ENCODE measurements at regions of chr7 and their contacts with region 1.

Region 1: GRCh38 chr7:116671681-116672595 is at the start of gene MET:
- DNase-seq: peak; percentile 93
- H3K4me3 Mint-ChIP-seq: peak within 1 kb of the TSS; percentile 83
- H3K27ac Mint-ChIP-seq: peak within 1 kb of the TSS; percentile 98
- H3K4me1 Mint-ChIP-seq: peaks cover 19% of the 10 kb centered on the region
- H3K27me3 Mint-ChIP-seq: no peaks in the 10 kb centered on the region
- CTCF ChIP-seq: peak; percentile 64
- total RNA-seq, gene MET: 129 and 154 TPM in 2 replicates

Region 2: GRCh38 chr7:115827305-115828045 is 844.5 kb before region 1 on chr7:
- CTCF ChIA-PET with region 1: no interaction called
- POLR2A ChIA-PET with region 1: no interaction called
- intact Hi-C with region 1: no loop called
- DNase-seq: no peak
- H3K4me3 Mint-ChIP-seq: no peak overlapping the region
- H3K27ac Mint-ChIP-seq: no peak overlapping the region
- H3K4me1 Mint-ChIP-seq: no peaks in the 10 kb centered on the region
- H3K27me3 Mint-ChIP-seq: peaks cover 76% of the 10 kb centered on the region
- CTCF ChIP-seq: no peak

Region 3: GRCh38 chr7:116588641-116589594 is 83.0 kb before region 1 on chr7:
- CTCF ChIA-PET with region 1: interaction called, 48 read pairs
- POLR2A ChIA-PET with region 1: interaction called, 28 read pairs
- intact Hi-C with region 1: loop called (anchors 2 kb)
- DNase-seq: peak; percentile 64
- H3K4me3 Mint-ChIP-seq: no peak overlapping the region
- H3K27ac Mint-ChIP-seq: peak overlapping the region; percentile 85
- H3K4me1 Mint-ChIP-seq: peaks cover 16% of the 10 kb centered on the region
- H3K27me3 Mint-ChIP-seq: peaks cover 10% of the 10 kb centered on the region
- CTCF ChIP-seq: peak; percentile 57

Region 4: GRCh38 chr7:116653204-116653603 is 18.7 kb before region 1 on chr7:
- CTCF ChIA-PET with region 1: interaction called, 62 read pairs
- POLR2A ChIA-PET with region 1: interaction called, 91 read pairs
- intact Hi-C with region 1: no loop called
- DNase-seq: peak; percentile 83
- H3K4me3 Mint-ChIP-seq: no peak overlapping the region
- H3K27ac Mint-ChIP-seq: peak overlapping the region; percentile 64
- H3K4me1 Mint-ChIP-seq: peaks cover 17% of the 10 kb centered on the region
- H3K27me3 Mint-ChIP-seq: no peaks in the 10 kb centered on the region
- CTCF ChIP-seq: no peak

Region 5: GRCh38 chr7:116698930-116699710 is 27.2 kb after region 1 on chr7:
- CTCF ChIA-PET with region 1: interaction called, 3 read pairs
- POLR2A ChIA-PET with region 1: interaction called, 77 read pairs
- intact Hi-C with region 1: no loop called
- DNase-seq: no peak
- H3K4me3 Mint-ChIP-seq: no peak overlapping the region
- H3K27ac Mint-ChIP-seq: no peak overlapping the region
- H3K4me1 Mint-ChIP-seq: peaks cover 20% of the 10 kb centered on the region
- H3K27me3 Mint-ChIP-seq: no peaks in the 10 kb centered on the region
- CTCF ChIP-seq: no peak

Region 6: GRCh38 chr7:116726713-116727431 is 54.9 kb after region 1 on chr7:
- CTCF ChIA-PET with region 1: interaction called, 3 read pairs
- POLR2A ChIA-PET with region 1: interaction called, 10 read pairs
- intact Hi-C with region 1: no loop called
- DNase-seq: no peak
- H3K4me3 Mint-ChIP-seq: no peak overlapping the region
- H3K27ac Mint-ChIP-seq: peak overlapping the region; percentile 29
- H3K4me1 Mint-ChIP-seq: peaks cover 30% of the 10 kb centered on the region
- H3K27me3 Mint-ChIP-seq: no peaks in the 10 kb centered on the region
- CTCF ChIP-seq: no peak

Region 7: DNA sequence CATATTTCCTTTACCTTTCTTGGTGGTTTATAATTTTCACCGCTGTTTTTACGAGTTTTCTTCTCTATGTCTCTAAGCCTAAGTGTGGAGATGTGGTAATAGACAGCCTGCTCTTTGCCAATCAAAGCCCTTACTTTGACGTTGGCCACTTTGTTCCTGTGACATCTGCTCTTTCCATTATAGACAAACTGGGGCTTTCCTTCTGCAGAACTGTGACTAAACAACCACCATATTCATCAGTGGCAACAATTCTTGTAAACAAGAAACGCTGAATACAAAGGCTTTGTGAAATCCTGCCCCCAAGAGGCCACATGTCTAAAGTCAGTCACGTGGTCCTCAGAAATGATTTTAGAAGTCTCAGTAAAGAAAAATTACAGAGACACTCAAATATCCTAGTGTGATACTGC is 130.8 kb after region 1 on chr7:
- CTCF ChIA-PET with region 1: interaction called, 10 read pairs
- POLR2A ChIA-PET with region 1: interaction called, 14 read pairs
- intact Hi-C with region 1: loop called (anchors 1 kb)
- DNase-seq: peak; percentile 77
- H3K4me3 Mint-ChIP-seq: peak overlapping the region; percentile 37
- H3K27ac Mint-ChIP-seq: peak overlapping the region; percentile 82
- H3K4me1 Mint-ChIP-seq: peaks cover 20% of the 10 kb centered on the region
- H3K27me3 Mint-ChIP-seq: no peaks in the 10 kb centered on the region
- CTCF ChIP-seq: peak; percentile 20

Region 8: DNA sequence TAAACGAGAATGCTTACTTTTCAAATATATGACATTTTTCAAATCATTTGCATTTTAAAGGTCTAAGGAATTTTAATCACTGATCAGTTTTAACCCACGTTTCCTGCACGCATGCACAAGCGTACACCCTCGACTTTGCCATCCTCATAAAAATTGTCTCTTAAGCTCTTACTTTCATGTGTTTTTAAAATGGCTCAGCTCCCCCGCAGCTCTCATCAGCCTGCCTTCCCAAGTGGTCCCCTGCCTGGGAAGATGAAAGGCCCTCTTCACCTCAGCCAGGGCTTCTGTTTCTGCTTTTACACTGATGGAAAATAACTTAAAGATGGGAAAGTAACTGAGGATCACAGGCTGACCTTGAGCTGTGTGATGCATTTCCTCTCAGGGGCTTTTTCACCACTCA is 1380.4 kb after region 1 on chr7:
- CTCF ChIA-PET with region 1: no interaction called
- POLR2A ChIA-PET with region 1: no interaction called
- intact Hi-C with region 1: no loop called
- DNase-seq: no peak
- H3K4me3 Mint-ChIP-seq: no peak overlapping the region
- H3K27ac Mint-ChIP-seq: no peak overlapping the region
- H3K4me1 Mint-ChIP-seq: peaks cover 7% of the 10 kb centered on the region
- H3K27me3 Mint-ChIP-seq: no peaks in the 10 kb centered on the region
- CTCF ChIP-seq: no peak